Mammary epithelial cell (primary cell): ENCODE measurements at regions of chr12 and their contacts with region 1.

Region 1: DNA sequence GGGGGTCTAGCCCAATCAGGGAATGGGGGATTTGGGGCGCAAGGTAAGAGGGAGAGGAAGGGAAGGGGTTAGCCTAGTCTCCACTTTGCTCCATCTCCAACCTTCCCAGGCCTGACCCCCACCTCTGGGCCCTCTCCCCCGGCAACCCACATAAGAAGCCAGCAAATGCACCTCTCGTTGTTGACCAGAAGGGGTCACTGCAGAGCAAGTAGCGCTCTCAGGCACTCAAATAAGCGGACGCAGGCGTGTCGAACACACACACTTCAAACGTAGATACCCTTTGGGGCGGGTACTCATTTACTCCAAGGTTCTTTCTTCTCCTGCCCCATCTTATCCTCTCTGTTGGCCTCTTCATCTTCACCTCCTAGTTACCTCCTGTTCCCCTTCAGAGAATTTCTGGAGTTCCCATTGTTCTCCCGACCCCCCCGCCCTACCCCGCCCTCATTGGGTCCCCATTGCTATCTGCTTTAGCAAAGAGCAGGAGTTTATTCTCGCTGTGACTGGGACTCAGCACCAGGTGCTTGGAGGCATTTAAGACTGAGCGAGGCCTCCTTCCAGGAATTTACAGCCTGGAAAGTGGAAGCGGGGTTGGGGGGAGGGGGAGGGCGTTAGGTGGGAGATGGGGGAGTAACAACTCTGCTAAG is 1.5 kb upstream of the SRRM4 start:
- DNase-seq: peak; percentile 5
- H3K4me3 ChIP-seq: no peak overlapping the region
- H3K27ac ChIP-seq: no peak overlapping the region
- H3K4me1 ChIP-seq: no peaks in the 10 kb centered on the region
- H3K27me3 ChIP-seq: no peaks in the 10 kb centered on the region
- CTCF ChIP-seq: peak; percentile 49 to 67

Region 2: GRCh38 chr12:118908811-118909210 is 71.1 kb before region 1 on chr12:
- CTCF ChIA-PET with region 1: no interaction called
- dilution Hi-C with region 1: no loop called
- in situ Hi-C with region 1: no loop called
- intact Hi-C with region 1: no loop called
- DNase-seq: no peak
- H3K4me3 ChIP-seq: no peak overlapping the region
- H3K27ac ChIP-seq: no peak overlapping the region
- H3K4me1 ChIP-seq: no peaks in the 10 kb centered on the region
- H3K27me3 ChIP-seq: no peaks in the 10 kb centered on the region
- CTCF ChIP-seq: no peak

Region 3: DNA sequence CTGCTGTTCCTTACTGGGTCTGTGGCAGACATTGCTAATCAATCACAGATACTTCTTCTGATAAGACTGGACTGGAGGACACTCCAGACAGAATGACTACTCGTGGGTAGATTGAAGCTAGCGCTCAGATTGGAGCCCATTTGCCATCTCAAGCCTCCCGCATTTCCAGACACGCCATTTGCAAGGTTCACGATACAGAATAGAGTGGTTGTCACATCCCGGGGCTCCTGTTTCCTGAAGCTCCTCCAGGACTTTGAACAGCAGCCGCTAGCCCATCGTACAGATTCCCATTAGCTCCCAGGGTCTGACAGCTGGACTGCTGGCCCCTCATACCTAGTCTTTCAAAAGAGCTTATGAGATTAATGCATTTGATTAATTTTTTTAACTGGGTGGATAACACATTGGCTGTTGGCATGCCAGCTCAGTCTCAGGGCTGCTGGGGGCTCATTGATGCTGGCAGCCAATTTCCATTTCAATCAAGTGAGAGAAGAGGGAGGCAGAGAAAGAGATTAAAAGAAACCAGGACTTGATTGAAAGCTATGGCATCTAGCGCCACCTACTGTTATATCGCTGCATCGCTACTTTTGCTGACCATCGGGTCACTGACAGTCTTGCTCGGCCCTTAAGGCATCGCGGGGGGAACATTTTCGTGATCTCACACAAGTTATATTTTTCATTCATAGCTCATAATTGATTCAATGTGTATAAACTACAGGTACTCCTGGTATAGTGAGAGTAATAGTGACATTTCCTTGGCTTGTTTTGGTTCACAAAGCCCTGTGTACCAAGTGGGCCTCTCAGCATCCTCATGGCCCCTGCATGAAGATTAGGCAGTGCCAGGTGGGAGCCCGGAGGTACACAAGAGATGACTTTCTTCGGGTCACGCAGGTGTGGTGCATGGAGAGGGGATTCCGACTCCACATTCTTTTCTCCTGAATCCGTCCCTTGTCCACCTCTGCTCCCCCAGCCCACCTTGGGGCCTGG is 433.2 kb after region 1 on chr12:
- CTCF ChIA-PET with region 1: no interaction called
- dilution Hi-C with region 1: no loop called
- in situ Hi-C with region 1: no loop called
- intact Hi-C with region 1: loop called (anchors 5 kb)
- DNase-seq: peak; percentile 28
- H3K4me3 ChIP-seq: no peak overlapping the region
- H3K27ac ChIP-seq: no peak overlapping the region
- H3K4me1 ChIP-seq: no peaks in the 10 kb centered on the region
- H3K27me3 ChIP-seq: no peaks in the 10 kb centered on the region
- CTCF ChIP-seq: peak; percentile 73 to 79